Tibial artery (tissue), 4 donors: ENCODE measurements at regions of chr1 and their contacts with region 1.

Region 1: DNA sequence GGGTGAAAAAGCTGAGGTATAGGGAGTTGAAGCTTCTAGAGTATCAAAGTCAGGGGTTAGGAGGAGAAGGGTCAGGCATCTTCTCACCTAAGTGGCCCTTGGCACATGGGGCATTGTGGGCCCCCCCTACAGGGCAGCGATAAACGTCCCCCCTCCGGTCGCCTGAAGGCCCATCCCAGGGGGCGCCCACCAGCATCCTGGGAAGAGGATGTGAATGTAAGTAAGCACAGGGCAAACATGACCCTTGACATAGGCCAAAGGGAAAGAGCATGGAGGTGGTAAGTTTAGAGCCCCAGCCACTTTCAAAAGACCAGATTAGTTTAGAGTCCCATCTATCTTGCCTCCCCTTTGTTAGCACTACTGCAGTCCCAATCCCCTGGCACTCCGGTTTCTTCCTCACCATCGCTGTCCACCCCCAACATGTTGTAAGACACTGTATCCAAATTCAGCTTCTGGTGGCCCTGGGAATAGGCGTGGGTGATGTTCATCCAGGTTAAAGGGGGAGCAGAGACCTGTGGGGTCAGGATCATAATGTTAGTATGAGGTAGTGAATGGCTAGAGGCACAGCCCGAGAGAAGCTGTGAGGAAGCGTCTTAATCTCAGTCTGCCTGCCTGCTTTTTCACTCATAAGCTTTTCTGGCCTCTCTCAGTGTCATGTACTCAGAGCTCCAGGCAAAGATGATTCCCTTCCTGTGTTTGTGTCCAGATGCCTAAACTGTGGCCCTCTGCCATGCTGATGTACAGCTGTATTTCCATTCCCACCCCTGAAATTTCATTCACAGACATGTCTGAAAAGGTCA is 2.7 kb downstream of the ITGA10 start:
- DNase-seq: no peak
- H3K4me3 ChIP-seq: no peak overlapping the region
- H3K27ac ChIP-seq: peak overlapping the region; percentile 37 to 65
- H3K4me1 ChIP-seq: peaks cover 0 to 28% (median 7%) of the 10 kb centered on the region in 4 donors
- H3K27me3 ChIP-seq: no peaks in the 10 kb centered on the region
- CTCF ChIP-seq: no peak

Region 2: GRCh38 chr1:145891587-145892485 is 15.3 kb before region 1 on chr1:
- intact Hi-C with region 1: loop called (anchors 1 kb)
- DNase-seq: peak; percentile 97
- H3K4me3 ChIP-seq: peak overlapping the region; percentile 2 to 19
- H3K27ac ChIP-seq: peak overlapping the region; percentile 92 to 93
- H3K4me1 ChIP-seq: peaks cover 0 to 37% (median 25%) of the 10 kb centered on the region in 4 donors
- H3K27me3 ChIP-seq: no peaks in the 10 kb centered on the region
- CTCF ChIP-seq: peak; percentile 96 to 98